ENCODE measurements at regions of chr22 and their contacts with region 1.

Region 1: DNA sequence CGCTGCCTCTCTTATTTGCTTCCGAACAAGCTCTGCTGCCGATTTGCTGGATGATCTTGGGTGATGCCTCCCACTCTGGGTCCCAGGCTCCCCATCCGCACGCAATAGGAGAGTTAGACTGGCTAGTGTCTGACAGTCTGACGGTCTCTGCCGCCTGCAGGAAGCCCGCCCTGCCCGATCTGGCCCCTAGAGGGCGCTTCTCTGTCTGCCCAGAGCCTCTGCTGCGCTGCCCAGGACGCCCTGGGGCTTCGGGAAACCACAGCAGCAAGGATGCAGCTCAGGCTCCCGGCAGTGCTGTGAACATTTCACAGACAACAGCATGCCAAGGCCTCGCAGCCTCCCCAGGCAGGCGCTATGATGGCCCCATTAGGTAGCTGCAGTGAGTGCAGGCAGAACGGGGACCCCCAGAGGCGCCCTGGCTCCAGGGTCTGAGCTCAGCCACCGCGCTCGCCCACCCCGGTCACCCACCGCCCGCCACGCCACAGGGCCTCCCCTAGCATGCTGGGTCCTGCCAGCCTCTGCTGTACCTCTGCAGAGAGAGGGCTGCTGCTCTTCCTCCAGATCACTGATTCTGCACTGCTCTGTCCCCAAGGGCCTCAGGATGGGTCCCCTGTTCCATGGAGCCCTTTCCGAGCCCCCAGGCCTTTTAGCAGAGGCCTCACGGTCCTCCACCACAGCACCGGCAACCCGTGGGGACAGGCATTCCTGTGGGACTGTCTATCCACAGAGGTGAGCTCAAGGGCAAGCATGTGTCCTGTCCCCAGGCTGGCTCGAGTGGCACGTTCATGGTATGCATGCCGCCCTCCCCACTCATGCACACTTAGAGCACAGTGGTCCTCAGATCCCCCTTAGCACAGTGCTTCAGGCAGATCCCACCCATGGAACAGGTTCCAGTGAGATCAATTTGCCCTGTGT is 4.3 kb upstream of the BAIAP2L2 start:
- DNase-seq: peak; percentile 84 to 88
- H3K4me3 ChIP-seq: no peak overlapping the region
- H3K27ac ChIP-seq: no peak overlapping the region
- H3K4me1 ChIP-seq: peaks cover 0 to 10% (median 4%) of the 10 kb centered on the region in 4 donors
- H3K27me3 ChIP-seq: no peaks in the 10 kb centered on the region
- CTCF ChIP-seq: peak; percentile 88 to 94

Region 2: GRCh38 chr22:37887610-37888378 is 226.9 kb before region 1 on chr22:
- intact Hi-C with region 1: no loop called
- DNase-seq: peak in 1 of 2 donors; percentile 60
- H3K4me3 ChIP-seq: no peak overlapping the region
- H3K27ac ChIP-seq: peak overlapping the region in 1 of 2 donors; percentile 32
- H3K4me1 ChIP-seq: peaks cover 0 to 50% (median 34%) of the 10 kb centered on the region in 4 donors
- H3K27me3 ChIP-seq: no peaks in the 10 kb centered on the region
- CTCF ChIP-seq: peak; percentile 27 to 32

Region 3: DNA sequence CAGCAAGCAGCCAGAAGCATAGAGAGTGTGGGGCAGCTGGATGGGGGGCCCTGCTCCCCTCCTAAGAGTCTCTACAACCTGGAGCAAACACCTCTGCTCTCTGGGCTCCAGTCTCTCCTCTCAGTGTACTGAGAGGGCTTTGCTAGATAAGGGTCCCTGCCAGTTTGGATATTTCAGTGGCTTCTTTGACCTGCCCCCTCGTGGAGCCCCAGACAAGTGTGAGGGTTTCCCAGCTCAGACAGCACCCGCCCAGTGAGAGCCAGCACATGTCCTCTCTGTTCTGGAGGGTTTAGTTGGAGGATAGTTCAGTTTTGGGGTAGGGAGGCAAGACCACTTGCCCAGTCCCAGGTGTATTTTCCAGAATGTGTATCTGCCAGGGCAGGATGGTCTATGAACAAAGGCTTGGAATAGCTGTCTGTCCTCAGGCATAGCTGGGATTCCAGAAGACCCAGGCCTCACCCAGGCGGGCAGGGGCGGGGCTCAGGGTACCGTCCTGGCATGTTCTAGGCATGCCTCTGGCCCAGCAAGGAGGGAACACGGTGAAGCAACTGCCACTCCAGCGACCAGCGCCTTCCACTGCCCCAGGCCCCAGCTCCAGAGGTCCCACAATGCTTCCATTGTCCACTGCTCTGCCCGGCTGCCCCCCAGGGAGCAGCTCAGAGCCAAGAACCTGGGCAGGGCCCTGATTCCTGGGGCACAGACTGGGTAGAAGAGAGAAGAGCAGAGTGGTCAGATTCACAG is 216.1 kb before region 1 on chr22:
- intact Hi-C with region 1: no loop called
- DNase-seq: no peak
- H3K4me3 ChIP-seq: no peak overlapping the region
- H3K27ac ChIP-seq: no peak overlapping the region
- H3K4me1 ChIP-seq: peaks cover 0 to 28% (median 14%) of the 10 kb centered on the region in 4 donors
- H3K27me3 ChIP-seq: no peaks in the 10 kb centered on the region
- CTCF ChIP-seq: no peak

Region 4: DNA sequence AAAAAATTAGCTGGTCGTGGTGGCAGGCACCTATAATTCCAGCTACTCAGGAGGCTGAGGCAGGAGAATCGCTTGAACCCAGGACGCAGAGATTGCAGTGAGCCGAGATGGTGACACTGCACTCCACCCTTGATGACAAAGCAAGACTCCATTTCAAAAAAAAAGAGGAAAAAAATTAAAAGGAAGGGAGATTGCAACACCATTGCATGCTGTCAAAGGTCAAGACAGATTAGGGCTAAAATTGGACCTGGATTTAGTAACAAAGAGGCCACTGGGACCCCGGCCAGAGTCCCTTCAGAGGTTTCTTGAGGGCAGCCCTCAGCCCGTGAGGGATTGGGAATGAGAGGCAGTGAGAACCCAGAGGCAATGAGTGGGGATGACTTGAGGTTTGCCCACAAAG is 78.8 kb after region 1 on chr22:
- intact Hi-C with region 1: loop called (anchors 10 kb)
- DNase-seq: no peak
- H3K4me3 ChIP-seq: no peak overlapping the region
- H3K27ac ChIP-seq: no peak overlapping the region
- H3K4me1 ChIP-seq: peaks cover 0 to 29% (median 0%) of the 10 kb centered on the region in 4 donors
- H3K27me3 ChIP-seq: no peaks in the 10 kb centered on the region
- CTCF ChIP-seq: no peak